HEK293 (cell line): ENCODE measurements at regions of chr6 and their contacts with region 1.

Region 1: GRCh38 chr6:42984001-42984923 is at the start of gene PPP2R5D:
- H3K4me3 ChIP-seq: peak within 1 kb of the TSS; percentile 83
- H3K27ac ChIP-seq: peak within 1 kb of the TSS; percentile 53; the same call in 1 of the 2 replicates
- H3K4me1 ChIP-seq: no peaks in the 10 kb centered on the region
- CTCF ChIP-seq: no peak

Region 2: DNA sequence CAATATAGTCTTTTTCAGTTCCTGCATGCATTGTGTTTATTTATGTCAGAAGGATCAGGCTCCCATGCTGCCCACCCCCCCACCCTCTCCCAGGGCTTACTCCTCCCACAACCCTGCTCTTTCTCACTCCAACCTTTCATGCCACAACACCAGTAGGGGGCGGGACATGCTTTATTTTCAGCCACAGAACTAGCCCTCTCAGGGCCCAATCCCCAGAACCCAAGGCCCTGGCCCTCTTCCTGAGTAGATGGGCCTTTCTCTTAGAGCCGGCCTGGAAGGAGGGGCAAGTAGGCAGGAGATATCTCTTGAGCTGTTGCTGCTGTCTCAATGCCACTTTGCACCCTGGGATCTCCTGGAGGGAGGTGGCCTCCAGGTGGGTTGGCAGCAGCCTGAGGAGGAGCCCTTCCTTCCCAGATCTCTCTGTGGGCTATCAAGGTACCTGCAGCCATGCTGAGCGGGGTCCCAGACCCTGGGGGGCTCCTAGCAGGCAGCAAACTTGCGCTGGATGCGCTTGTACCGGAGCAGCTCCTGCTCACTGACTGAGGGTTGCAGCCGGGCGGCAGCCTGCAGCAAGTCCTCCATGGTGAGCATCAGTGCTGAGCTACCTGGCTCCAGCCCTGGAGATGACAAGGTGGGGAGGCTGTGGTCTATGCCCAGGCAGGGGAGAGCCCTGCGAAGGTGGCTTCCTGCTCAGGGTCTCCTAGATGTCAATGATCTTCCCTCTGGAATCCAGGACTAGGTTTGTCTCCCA is 20.2 kb before region 1 on chr6:
- CTCF ChIA-PET with region 1: interaction called, 6 read pairs
- POLR2A ChIA-PET with region 1: interaction called, 20 read pairs
- H3K4me3 ChIP-seq: no peak overlapping the region
- H3K27ac ChIP-seq: no peak overlapping the region; the same call in 1 of the 2 replicates
- H3K4me1 ChIP-seq: 0 out of 2 replicates have a peak, but pooled peaks cover 4% of the 10 kb centered on the region
- CTCF ChIP-seq: 0 out of 2 replicates have a peak, but pooled peaks have one; percentile 15

Region 3: GRCh38 chr6:42996513-42996912 is 12.3 kb after region 1 on chr6:
- CTCF ChIA-PET with region 1: interaction called, 5 read pairs
- POLR2A ChIA-PET with region 1: interaction called, 31 read pairs
- H3K4me3 ChIP-seq: no peak overlapping the region
- H3K27ac ChIP-seq: no peak overlapping the region
- H3K4me1 ChIP-seq: no peaks in the 10 kb centered on the region
- CTCF ChIP-seq: no peak

Region 4: DNA sequence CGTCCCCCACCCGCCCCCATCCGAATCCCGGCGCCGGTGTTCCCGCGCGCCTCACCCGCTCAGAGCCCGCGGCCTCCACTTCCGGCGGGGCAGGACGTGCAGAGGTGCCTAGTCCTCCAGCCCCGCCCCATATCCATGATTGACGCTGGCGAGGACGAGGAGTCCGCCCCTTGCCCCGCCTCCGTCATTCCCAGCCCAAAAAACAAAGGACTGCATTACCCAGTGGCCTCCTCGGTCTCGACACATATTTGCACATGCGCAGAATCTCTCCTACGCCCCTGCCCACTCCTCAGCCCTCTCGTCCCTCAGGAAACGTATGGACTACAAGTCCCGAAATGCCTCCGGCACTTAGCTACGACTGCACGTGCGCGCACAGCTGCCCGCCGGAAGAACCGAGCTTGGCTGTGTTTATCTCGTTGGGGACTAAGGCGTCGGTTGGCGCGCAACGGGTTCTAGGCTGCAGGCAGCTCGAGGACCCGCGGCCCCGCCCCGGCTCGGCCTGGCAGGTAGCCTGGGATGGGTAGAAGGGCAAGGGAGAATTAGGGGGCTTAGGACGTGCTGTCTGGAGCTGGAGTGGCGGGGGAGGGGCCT is 29.7 kb after region 1 on chr6 and contains the starts of genes KLHDC3 and MEA1:
- CTCF ChIA-PET with region 1: interaction called, 10 read pairs
- POLR2A ChIA-PET with region 1: interaction called, 56 read pairs
- H3K4me3 ChIP-seq: peak within 1 kb of the TSS; percentile 70
- H3K27ac ChIP-seq: peak within 1 kb of the TSS; percentile 76
- H3K4me1 ChIP-seq: peaks cover 12% of the 10 kb centered on the region
- CTCF ChIP-seq: no peak

Region 5: GRCh38 chr6:43053545-43054205 is 69.4 kb after region 1 on chr6 and contains the start of gene CUL7:
- CTCF ChIA-PET with region 1: no interaction called
- POLR2A ChIA-PET with region 1: interaction called, 24 read pairs
- H3K4me3 ChIP-seq: peak within 1 kb of the TSS; percentile 74
- H3K27ac ChIP-seq: peak within 1 kb of the TSS; percentile 85
- H3K4me1 ChIP-seq: peaks cover 9% of the 10 kb centered on the region
- CTCF ChIP-seq: peak; percentile 77; the same call in 1 of the 2 replicates